Activated CD8-positive, alpha-beta memory T cell treated with anti-CD3 and anti-CD28 coated beads, Interleukin-2, amount 10 ng/mL, durations not matched to agents 7 days and 5 days (primary cell): ENCODE measurements at regions of chrX and their contacts with region 1.

Region 1: DNA sequence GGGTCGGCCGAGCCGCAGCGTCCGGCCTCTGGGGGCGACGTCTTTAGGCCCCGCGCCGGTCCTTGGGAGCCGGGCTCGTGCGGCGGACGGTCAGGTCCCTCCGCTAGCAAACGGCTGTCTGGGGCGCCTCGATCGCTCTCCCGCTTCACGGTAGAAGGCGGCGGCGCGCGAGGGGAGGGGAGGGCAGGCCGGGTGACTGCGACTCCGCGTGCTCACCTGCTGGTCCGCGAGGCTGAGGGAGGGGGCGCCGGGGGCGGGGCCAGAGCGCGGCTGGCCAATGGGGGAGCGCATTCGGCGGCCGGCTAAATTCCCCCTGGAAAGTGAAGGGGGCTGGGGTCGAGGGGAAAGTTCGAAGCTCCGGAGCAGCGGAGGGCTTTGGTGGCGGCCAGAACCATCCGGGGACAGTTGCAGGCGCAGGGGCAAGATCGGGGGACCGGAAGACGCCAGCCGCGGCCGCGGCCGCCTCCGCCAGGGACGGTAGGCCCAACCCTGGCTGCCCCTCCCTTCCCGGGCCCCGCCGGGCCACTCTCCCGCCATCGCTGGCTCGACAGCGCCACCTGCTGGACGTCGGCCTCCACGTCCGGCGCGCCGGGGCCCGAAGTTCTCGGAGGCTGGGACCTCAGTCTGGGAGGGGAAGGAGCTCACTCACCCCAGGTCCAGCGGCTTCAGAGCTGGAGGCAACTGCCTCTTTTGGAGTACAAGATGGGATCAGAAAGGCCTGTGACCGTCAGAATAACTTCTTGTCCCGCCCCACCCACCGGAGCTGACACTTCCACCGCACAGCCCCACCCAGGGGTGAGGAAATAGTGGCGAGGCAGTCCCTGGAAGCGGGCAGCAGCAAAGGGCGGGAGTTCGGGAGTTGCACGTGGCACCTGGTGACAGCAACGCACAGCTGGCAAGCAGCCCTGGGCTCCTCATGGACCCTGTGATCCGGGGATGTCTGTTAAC is 49.9 kb downstream of the ELF4 start:
- DNase-seq: peak; percentile 85
- ATAC-seq: peak; percentile 95
- H3K4me3 Mint-ChIP-seq: peak overlapping the region; percentile 73
- H3K27ac Mint-ChIP-seq: peak overlapping the region; percentile 81
- H3K4me1 Mint-ChIP-seq: peaks cover 7% of the 10 kb centered on the region
- H3K27me3 Mint-ChIP-seq: no peaks in the 10 kb centered on the region

Region 2: DNA sequence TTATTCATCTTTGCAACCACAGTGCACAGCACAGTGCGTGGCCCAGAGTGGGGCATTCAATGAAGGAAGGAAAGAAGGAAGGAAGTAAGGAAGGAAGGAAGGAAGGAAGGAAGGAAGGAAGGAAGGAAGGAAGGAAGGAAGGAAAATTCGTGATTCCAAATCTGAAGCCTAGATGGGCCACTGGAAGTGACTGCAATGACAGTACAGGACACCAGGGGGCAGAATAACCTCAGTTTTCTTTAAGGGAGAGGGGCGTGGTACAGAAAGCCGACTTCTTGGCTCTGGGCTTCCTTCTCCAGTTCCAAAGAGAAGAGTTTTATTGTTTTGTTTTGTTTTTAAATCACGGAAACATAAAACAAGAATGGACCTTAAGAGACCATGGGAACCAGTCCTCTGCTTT is 453.5 kb before region 1 on chrX:
- CTCF ChIA-PET with region 1: interaction called, 19 read pairs
- DNase-seq: peak; percentile 56
- ATAC-seq: peak; percentile 45
- H3K4me3 Mint-ChIP-seq: no peak overlapping the region
- H3K27ac Mint-ChIP-seq: no peak overlapping the region
- H3K4me1 Mint-ChIP-seq: peaks cover 23% of the 10 kb centered on the region
- H3K27me3 Mint-ChIP-seq: no peaks in the 10 kb centered on the region

Region 3: DNA sequence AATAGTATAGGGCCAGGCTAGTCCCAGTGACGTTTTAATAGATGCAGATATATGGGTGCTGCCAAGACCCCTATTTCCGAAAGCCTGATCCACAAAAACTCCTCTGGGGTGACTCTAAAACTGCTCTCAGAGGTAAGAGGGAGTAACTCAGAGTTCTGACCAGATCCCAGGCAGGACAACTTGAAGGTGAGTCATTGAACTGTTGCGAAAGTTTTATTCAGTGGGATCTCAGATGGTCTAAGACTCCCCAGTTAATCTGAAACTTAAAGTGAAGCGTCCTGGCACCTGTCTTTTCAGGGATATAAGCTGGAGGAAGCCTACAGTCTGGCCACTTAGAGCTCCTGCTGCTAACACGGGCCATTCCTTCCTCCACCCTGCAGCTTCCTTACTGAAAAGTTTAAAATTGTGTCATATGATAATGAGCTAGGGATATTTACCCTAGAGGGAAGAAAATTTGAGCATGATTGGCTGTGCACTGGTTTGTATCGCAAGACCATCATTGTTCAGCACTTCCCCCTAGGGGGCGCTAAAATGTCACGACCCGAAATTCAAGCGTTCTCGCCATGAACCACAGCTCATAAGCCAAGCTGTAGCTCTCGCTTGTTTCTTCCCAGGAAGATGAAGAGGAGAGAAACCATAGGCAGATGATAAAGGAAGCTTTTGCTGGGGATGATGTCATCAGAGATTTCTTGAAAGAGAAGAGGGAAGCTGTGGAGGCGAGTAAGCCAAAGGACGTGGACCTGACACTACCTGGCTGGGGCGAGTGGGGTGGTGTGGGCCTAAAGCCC is 134.9 kb before region 1 on chrX:
- CTCF ChIA-PET with region 1: interaction called, 50 read pairs
- DNase-seq: peak; percentile 79
- ATAC-seq: peak; percentile 80
- H3K4me3 Mint-ChIP-seq: no peak overlapping the region
- H3K27ac Mint-ChIP-seq: peak overlapping the region; percentile 40
- H3K4me1 Mint-ChIP-seq: peaks cover 4% of the 10 kb centered on the region
- H3K27me3 Mint-ChIP-seq: no peaks in the 10 kb centered on the region

Region 4: DNA sequence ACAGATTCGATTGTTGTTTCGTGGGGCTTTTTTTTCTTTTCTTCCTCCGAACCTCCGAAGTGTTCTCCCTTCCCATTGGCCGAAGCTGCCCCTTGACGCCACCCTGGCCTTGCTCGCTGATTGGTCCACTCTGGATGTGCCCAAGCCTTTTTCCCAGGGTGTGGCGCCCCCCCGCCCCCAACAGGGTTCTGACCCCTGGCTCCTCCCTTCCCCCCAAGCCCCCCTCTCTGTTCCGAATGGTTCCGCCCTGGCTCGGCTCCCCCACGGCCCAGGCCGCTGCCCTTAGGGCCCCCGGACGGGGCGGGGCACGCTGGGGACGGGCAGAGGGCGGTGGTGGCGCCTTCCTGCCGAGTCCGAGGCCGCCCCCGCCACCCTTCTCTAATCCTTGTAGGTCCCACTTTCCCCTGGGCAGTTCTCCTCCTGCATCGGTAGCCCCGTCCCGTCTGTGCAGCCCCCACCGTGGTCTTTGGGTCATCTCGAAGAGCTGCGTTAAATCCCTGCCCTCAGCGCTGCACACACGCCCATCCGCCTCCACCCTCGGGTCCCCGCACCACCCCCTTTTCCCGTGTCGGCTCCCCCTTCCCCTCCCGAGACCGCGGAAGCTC is 128.9 kb before region 1 on chrX:
- CTCF ChIA-PET with region 1: interaction called, 50 read pairs
- DNase-seq: peak; percentile 89
- ATAC-seq: peak; percentile 73
- H3K4me3 Mint-ChIP-seq: peak overlapping the region; percentile 78
- H3K27ac Mint-ChIP-seq: peak overlapping the region; percentile 93
- H3K4me1 Mint-ChIP-seq: peaks cover 5% of the 10 kb centered on the region
- H3K27me3 Mint-ChIP-seq: peaks cover 19% of the 10 kb centered on the region